ENCODE measurements at regions of chr9 and their contacts with region 1.

Region 1: GRCh38 chr9:3331817-3332216 is 194.0 kb downstream of the RFX3 start:
- DNase-seq: no peak
- ATAC-seq: no peak
- H3K4me3 ChIP-seq: no peak overlapping the region
- H3K27ac ChIP-seq: no peak overlapping the region
- H3K4me1 ChIP-seq: peaks cover 0 to 13% (median 5%) of the 10 kb centered on the region in 9 donors
- H3K27me3 ChIP-seq: no peaks in the 10 kb centered on the region
- CTCF ChIP-seq: peak in 6 of 9 donors; percentile 15 to 44 (median 25)

Region 2: DNA sequence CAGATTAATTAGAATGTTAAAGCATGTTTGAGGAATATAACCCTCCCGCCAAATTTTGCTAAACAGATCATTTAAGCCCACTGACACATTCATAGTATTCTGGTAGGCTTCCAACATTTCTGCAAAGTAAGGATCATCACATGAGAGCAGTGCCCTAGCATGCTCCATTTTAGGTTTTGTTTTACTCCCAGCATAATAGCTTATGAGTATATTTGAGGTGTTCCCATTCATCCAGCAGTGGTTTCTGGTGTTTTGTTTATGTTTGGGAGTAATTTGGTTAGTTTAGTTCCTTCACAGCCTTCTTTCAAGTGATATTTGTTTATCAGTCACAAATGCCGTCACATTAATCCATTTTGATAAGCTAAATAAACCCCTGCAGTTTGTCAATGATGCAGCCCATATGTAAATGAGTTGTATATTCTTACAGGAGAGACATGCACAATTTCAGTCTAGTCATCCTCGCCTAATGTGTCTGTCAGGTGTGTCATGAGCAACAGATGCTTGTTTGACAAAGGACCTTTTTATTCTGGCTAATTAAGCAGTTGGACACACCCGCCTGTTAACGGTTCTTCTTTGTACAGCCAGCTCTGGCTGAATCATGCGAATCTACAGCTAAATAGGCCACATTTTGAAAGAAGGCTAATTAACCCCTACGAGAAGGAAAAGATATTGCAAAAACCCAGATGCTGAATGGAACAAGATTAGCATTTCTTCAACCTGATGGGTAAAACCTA is 69.6 kb after region 1 on chr9:
- intact Hi-C with region 1: loop called in 1 of 10 experiments (anchors 10 kb)
- DNase-seq: no peak
- ATAC-seq: no peak
- H3K4me3 ChIP-seq: no peak overlapping the region
- H3K27ac ChIP-seq: no peak overlapping the region
- H3K4me1 ChIP-seq: peaks cover 0 to 21% (median 0%) of the 10 kb centered on the region in 9 donors
- H3K27me3 ChIP-seq: no peaks in the 10 kb centered on the region
- CTCF ChIP-seq: no peak

Region 3: GRCh38 chr9:3458806-3459475 is 127.1 kb after region 1 on chr9:
- intact Hi-C with region 1: no loop called
- DNase-seq: no peak
- ATAC-seq: no peak
- H3K4me3 ChIP-seq: no peak overlapping the region
- H3K27ac ChIP-seq: no peak overlapping the region
- H3K4me1 ChIP-seq: peaks cover 0 to 9% (median under 1%) of the 10 kb centered on the region in 9 donors
- H3K27me3 ChIP-seq: no peaks in the 10 kb centered on the region
- CTCF ChIP-seq: no peak

Region 4: GRCh38 chr9:4750023-4750673 is 1418.3 kb after region 1 on chr9:
- intact Hi-C with region 1: no loop called
- DNase-seq: no peak
- ATAC-seq: peak in 7 of 8 donors; percentile 41 to 74 (median 62)
- H3K4me3 ChIP-seq: no peak overlapping the region
- H3K27ac ChIP-seq: no peak overlapping the region
- H3K4me1 ChIP-seq: peaks cover 0 to 7% (median 2%) of the 10 kb centered on the region in 9 donors
- H3K27me3 ChIP-seq: no peaks in the 10 kb centered on the region
- CTCF ChIP-seq: peak in 8 of 9 donors; percentile 24 to 73 (median 64)

Measured in heart right ventricle (tissue), 16 donors.